ENCODE measurements at regions of chr15 and their contacts with region 1.

Region 1: DNA sequence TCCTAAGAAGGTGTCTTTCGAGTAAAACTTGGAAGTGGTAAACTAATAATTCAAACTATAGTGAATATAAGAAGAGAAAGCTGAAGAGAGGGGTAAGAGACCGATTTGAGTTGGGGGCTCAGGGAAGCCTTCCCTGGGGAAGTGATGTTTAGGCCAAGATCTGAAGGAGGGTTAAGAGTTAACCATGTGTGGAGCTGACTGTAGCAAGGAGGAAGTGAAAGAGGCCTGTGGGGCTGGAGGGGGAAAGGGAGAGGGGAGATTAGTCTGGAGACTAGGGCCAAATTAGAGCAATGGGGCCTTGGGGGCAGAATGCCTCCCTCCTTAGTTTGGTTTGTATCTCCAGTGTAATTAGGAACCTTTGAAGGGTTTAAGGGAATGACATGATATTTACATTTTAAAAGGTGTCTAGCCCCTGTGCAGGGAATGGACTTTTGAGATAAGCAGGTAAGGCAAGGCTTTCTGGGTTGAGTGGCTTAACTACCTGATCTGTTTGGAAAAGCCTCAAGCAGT is 2.2 kb downstream of the ZNF592 start:
- DNase-seq: no peak
- ATAC-seq: no peak

Region 2: DNA sequence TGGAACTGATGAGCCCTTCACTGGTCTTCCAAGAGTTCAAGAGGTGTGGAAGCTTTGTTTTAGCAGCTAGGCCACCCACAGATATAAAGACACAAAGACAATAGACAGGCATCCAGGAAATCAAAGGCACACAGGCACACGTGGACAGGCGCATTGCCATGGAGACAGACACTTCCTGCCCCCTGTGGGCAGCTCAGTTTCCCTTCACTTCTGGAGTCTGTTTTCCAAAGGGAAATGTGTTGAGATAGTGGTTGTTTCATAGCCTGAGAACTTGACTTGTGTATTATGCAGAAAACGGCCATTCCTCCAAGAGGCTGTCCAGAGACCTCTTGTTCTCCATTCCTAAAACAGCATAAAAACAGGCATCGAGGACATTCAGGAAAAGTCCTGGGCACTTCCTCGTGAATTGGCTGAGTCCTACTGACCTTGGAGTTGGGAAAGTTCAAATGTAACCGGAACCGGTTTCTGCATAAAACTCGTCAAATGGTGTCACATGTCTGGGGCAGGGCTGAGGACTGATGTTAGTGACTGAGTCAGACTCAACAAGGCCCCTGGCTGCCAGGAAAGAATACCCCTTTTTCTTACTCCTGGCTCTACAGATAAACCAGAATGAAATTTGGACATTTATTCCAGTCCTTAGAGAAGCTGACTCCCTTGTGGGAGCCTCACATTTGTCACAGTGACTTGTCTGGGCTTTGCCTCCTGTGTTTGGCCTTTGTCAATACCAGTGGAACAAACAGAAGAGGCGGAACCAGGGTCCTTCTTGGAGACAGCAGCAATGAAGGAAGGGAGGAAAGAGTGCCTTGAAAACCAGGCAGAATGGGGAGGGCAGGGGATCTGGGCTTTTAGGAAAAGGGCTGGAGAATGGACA is 67.9 kb after region 1 on chr15:
- intact Hi-C with region 1: loop called in 1 of 2 experiments (anchors 5 kb)
- DNase-seq: peak; percentile 79
- ATAC-seq: peak; percentile 16 to 18

Measured in left cardiac atrium (tissue), 4 donors.